SK-N-SH (cell line): ENCODE measurements at regions of chr5 and their contacts with region 1.

Region 1: DNA sequence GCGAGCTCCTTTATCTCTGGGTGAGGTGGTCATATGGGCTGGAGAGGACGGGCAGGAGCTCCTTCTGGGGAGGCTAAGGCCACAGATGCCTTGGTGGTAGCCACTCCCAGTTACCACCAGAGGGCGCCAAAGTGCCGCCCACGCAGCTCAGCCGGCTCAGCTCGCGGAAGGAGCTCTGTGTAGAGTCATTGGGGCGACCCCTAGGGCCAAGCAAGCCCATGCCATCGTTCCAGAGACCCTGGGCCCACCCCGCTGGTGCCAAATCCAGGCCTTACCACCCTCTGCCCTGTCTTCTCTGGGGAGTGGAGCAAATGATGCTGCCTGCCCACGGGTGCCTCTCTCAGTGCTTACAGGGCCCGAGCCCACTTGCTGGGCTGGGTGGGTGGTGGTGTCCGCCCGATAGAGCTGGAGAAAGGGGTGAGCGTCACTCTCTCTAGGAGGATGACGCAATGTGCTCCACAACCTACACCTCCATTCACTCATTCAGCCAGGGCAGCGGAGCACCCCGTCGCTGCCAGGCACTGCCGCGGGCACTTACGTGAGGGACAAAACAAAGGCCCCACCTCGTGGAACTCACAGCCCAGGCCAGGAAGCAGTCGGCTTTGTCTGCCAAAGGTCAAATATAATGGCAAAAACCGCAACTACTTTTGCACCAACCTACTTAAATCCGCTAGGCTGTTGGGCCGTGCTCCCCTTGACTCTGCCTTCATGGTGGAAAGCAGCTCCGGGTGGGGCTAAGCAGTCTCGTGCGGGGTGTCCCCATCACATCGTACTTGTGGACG is 13.8 kb downstream of the TSPAN17 start:
- DNase-seq: peak; percentile 92
- H3K4me3 ChIP-seq: no peak overlapping the region; a peak in 1 of 4 replicates
- H3K27ac ChIP-seq: no peak overlapping the region
- H3K4me1 ChIP-seq: peaks cover 0 to 23% of the 10 kb centered on the region in 2 experiments; a peak in 1 of 4 replicates
- H3K27me3 ChIP-seq: no peaks in the 10 kb centered on the region
- CTCF ChIP-seq: peak; percentile 92
- EP300 ChIP-seq: no peak
- RAD21 ChIP-seq: peak; percentile 97

Region 2: DNA sequence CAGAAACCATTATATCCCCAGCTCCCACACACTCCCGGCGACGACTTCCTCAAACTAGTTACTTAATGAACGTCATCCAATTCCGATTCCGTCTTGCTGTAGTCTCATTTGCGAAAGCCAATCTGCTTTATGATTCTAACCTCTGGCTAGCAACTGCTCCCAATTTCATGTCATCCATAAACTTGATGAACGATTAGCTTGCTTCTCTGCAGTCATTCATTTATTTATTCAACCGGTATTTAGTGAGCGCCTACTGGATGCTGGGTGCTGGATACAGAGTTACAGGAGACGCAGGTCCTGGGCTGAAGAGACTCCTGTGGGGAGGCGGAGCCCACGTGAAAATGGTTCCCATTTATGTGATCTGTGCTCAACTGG is 32.4 kb after region 1 on chr5:
- CTCF ChIA-PET with region 1: interaction called, 25 read pairs
- POLR2A ChIA-PET with region 1: no interaction called
- DNase-seq: no peak
- H3K4me3 ChIP-seq: no peak overlapping the region
- H3K27ac ChIP-seq: no peak overlapping the region
- H3K4me1 ChIP-seq: no peaks in the 10 kb centered on the region
- H3K27me3 ChIP-seq: peaks cover 17% of the 10 kb centered on the region
- CTCF ChIP-seq: no peak
- EP300 ChIP-seq: no peak
- RAD21 ChIP-seq: no peak

Region 3: GRCh38 chr5:176744584-176744965 is 83.5 kb after region 1 on chr5:
- CTCF ChIA-PET with region 1: interaction called, 24 read pairs
- POLR2A ChIA-PET with region 1: no interaction called
- DNase-seq: peak; percentile 50
- H3K4me3 ChIP-seq: no peak overlapping the region
- H3K27ac ChIP-seq: no peak overlapping the region
- H3K4me1 ChIP-seq: peaks cover 0 to 20% of the 10 kb centered on the region in 2 experiments; a peak in 1 of 4 replicates
- H3K27me3 ChIP-seq: no peaks in the 10 kb centered on the region
- CTCF ChIP-seq: peak; percentile 43; the same call in 1 of the 2 replicates
- EP300 ChIP-seq: no peak
- RAD21 ChIP-seq: peak; percentile 43

Region 4: DNA sequence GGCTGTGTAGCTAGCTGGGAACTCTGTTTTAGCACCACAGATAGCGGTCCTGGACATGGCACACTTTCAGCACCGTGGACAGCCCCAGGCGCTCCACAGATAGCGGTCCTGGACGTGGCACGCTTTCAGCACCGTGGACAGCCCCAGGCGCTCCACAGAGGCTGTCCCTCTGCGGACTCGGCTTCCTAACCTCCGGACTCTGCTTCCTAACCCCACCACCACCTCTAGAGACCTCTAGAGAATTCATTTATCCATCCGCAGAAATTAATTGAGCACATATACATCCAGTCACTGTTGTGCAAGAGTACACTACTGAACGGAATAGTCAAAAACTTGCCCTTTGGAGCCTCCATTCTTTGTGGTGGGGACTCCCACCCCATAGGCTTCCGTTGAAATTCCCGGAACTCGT is 176.7 kb after region 1 on chr5:
- CTCF ChIA-PET with region 1: interaction called, 19 read pairs
- POLR2A ChIA-PET with region 1: interaction called, 3 read pairs
- DNase-seq: no peak
- H3K4me3 ChIP-seq: no peak overlapping the region
- H3K27ac ChIP-seq: peak overlapping the region in 1 of 2 experiments; percentile 87; a peak in 2 of 4 replicates
- H3K4me1 ChIP-seq: peaks cover 0 to 77% of the 10 kb centered on the region in 2 experiments; a peak in 2 of 4 replicates
- H3K27me3 ChIP-seq: peaks cover 4% of the 10 kb centered on the region; the same call in 1 of the 2 replicates
- CTCF ChIP-seq: no peak
- EP300 ChIP-seq: no peak
- RAD21 ChIP-seq: no peak

Region 5: GRCh38 chr5:176965633-176966032 is 304.6 kb after region 1 on chr5:
- CTCF ChIA-PET with region 1: interaction called, 53 read pairs
- POLR2A ChIA-PET with region 1: no interaction called
- DNase-seq: no peak
- H3K4me3 ChIP-seq: no peak overlapping the region
- H3K27ac ChIP-seq: no peak overlapping the region; a peak in 1 of 4 replicates
- H3K4me1 ChIP-seq: no peaks in the 10 kb centered on the region; a peak in 2 of 4 replicates
- H3K27me3 ChIP-seq: no peaks in the 10 kb centered on the region
- CTCF ChIP-seq: no peak
- EP300 ChIP-seq: no peak
- RAD21 ChIP-seq: no peak

Region 6: GRCh38 chr5:177071666-177072385 is 410.8 kb after region 1 on chr5:
- CTCF ChIA-PET with region 1: interaction called, 18 read pairs
- POLR2A ChIA-PET with region 1: no interaction called
- DNase-seq: peak; percentile 74
- H3K4me3 ChIP-seq: no peak overlapping the region
- H3K27ac ChIP-seq: no peak overlapping the region
- H3K4me1 ChIP-seq: no peaks in the 10 kb centered on the region; a peak in 1 of 4 replicates
- H3K27me3 ChIP-seq: no peaks in the 10 kb centered on the region
- CTCF ChIP-seq: peak; percentile 92
- EP300 ChIP-seq: no peak
- RAD21 ChIP-seq: peak; percentile 77